ENCODE measurements at regions of chr16 and their contacts with region 1.

Region 1: DNA sequence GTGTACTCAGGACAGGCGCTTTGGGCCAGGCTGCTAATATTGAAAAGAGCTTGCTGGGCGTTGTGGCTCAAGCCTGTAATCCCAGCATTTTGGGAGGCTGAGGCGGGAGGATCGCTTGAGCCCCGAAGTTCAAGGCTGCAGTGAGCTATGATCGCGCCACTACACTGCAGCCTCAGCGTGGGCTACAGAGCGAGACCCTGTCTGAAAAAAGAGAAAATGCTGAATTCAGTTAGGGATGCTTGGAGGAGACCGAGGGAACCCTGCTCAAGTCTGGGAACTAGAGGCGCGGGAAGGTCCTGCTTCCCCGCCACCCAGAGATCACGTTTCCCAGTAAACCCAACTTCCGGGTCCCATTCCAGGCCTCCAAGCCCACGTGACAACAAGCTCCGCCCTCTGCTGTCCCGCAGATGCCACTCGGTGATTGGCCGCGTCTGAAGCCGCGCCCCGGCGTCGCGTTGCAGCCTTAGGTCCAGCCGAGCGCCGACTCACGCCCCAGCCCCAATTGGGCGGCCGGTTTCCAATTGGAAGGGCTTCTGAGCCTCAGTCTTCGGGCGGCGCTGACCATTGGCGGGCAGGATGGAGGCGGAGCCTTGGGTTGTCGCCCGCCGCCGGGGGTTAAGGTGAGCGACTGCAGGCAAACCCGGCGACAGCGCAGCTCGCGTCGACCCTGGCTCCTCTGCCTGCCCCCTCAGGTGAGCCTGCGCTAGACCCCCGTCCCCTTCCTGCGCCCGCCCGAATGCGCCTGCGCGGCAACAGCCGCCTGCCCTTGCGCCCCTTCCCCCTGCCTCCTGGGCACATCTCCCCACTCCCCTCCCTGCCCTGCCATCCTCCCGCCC is at the start of gene PHKG2:
- DNase-seq: peak; percentile 99
- H3K4me3 Mint-ChIP-seq: peak within 1 kb of the TSS; percentile 90
- H3K27ac Mint-ChIP-seq: peak within 1 kb of the TSS; percentile 86
- H3K4me1 Mint-ChIP-seq: peaks cover 31% of the 10 kb centered on the region
- H3K27me3 Mint-ChIP-seq: no peaks in the 10 kb centered on the region
- total RNA-seq, gene PHKG2: 41.1 to 43.4 TPM

Region 2: GRCh38 chr16:30700491-30700890 is 47.5 kb before region 1 on chr16:
- CTCF ChIA-PET with region 1: no interaction called
- POLR2A ChIA-PET with region 1: no interaction called
- DNase-seq: no peak
- H3K4me3 Mint-ChIP-seq: peak overlapping the region; percentile 93
- H3K27ac Mint-ChIP-seq: no peak overlapping the region
- H3K4me1 Mint-ChIP-seq: peaks cover 29% of the 10 kb centered on the region
- H3K27me3 Mint-ChIP-seq: no peaks in the 10 kb centered on the region

Region 3: DNA sequence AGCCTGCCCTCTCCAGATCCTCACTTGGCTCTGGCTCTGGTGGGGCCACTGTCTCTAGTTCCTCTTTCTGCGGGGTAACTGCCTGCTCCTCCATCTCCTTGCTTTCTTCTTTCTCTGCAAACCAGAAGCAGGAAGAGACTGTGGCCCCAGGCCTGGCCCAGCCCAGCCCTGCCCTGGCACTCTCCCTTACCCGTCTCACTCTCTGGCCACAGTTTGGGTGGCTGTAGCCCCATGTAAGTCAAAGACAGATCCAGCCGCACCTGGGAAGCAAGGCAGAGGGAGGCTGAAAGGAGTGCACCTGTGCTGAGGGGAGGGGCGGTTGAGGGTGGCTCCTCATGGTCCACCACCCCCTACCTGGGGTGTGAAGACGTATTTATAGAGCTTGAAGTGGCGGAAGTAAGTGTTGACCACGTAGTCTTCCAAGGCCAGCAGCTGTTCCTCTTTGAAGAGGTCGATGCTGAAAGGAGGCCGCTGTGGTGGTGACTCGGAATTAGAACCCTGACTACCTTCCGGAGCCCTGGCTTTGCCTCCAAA is 11.0 kb after region 1 on chr16:
- CTCF ChIA-PET with region 1: interaction called, 11 read pairs
- POLR2A ChIA-PET with region 1: no interaction called
- DNase-seq: no peak
- H3K4me3 Mint-ChIP-seq: no peak overlapping the region
- H3K27ac Mint-ChIP-seq: no peak overlapping the region
- H3K4me1 Mint-ChIP-seq: peaks cover 32% of the 10 kb centered on the region
- H3K27me3 Mint-ChIP-seq: no peaks in the 10 kb centered on the region

Measured in activated CD4-positive, alpha-beta T cell treated with anti-CD3 and anti-CD28 coated beads, Interleukin-2, amount 10 ng/mL, durations not matched to agents 7 days and 5 days (primary cell).